ENCODE measurements at regions of chr5 and their contacts with region 1.

Region 1: DNA sequence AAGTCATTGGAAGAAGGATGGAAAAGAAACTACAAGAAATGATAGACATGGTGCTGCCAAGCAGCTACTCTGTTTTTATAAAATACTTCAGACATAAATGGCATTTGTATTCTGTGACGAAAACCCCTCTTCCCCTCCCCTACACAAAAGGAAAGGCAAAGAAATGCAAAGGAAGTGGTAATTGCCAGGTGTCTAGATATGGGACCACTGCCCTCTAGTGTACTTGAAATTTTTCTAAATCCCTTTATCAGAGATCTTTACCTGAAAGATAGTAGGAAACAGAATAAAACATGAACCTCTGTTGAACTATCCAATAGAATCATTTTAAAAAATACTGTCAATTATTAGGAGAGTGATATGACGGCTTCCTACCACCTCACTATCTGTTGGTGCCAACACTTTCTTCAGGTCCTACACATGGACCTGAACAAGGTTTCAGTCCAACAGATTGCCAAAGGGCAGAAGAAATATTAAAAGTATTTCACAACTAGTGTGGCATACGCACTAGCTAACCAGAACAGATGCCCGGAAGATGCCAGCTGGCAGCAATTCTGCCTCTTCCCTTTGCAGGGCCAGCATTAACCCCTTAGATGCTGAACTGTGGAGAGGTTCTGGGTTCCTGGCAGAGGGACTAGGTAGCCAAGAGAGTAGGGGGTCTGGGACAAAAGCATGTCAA is 104.1 kb downstream of the TSSK1B start:
- DNase-seq: peak in 4 of 5 donors; percentile 29 to 69 (median 54)
- ATAC-seq: peak; percentile 73 to 88 (median 82)
- H3K4me3 ChIP-seq: no peak overlapping the region
- H3K27ac ChIP-seq: no peak overlapping the region
- H3K4me1 ChIP-seq: peaks cover 0 to 14% (median 7%) of the 10 kb centered on the region in 12 donors
- H3K27me3 ChIP-seq: no peaks in the 10 kb centered on the region
- CTCF ChIP-seq: peak in 11 of 12 donors; percentile 22 to 67 (median 59)
- POLR2A ChIP-seq: no peak

Region 2: GRCh38 chr5:112174959-112175594 is 1155.6 kb before region 1 on chr5:
- intact Hi-C with region 1: loop called in 1 of 10 experiments (anchors 10 kb)
- DNase-seq: peak in 2 of 5 donors; percentile 16 to 26
- ATAC-seq: peak in 3 of 4 donors; percentile 64 to 74 (median 72)
- H3K4me3 ChIP-seq: no peak overlapping the region
- H3K27ac ChIP-seq: no peak overlapping the region
- H3K4me1 ChIP-seq: no peaks in the 10 kb centered on the region
- H3K27me3 ChIP-seq: no peaks in the 10 kb centered on the region
- CTCF ChIP-seq: peak; percentile 48 to 76 (median 70)
- POLR2A ChIP-seq: no peak

Region 3: DNA sequence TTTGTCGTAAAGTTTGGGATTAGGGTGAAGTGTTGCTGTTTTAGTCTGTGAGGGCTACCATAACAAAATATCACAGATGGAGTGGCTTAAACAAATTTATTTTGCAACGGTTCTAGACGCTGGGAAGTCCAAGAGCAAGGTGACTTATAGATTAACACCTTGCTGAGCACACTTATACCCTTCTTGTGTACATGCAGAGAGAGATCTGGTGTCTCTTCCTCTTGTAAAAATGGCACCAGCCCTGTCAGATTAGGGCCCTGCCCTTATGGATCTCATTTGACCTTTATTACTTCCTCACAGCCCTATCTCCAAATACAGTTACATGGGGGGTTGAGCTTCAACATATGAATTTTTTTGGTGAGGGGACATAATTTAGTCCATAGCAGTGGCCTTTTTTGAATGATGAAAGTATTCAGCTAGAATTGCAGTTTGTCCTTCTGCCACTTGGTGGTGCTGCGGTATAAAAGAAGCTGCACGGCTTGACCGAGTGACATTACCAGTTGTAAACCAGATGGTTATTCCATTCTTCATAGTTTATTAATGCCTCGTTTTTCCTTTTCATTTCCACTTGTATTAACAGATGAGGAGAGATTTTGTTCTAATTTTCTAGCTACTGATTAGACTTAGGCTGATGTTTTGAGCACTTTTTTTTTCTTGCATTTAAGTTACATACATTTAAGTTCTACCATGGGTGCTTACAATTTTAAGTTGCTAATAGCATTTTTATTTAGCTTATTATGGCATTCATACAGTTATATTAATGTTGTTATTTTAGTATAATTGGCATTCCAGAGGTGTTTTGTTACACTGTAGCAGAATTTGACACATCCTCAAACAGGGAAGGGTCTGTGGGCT is 334.7 kb before region 1 on chr5:
- intact Hi-C with region 1: loop called in 9 of 10 experiments (anchors 2 to 5 kb)
- DNase-seq: peak in 4 of 5 donors; percentile 55 to 69 (median 62)
- ATAC-seq: peak in 3 of 4 donors; percentile 69 to 84 (median 84)
- H3K4me3 ChIP-seq: no peak overlapping the region
- H3K27ac ChIP-seq: no peak overlapping the region
- H3K4me1 ChIP-seq: peaks cover 0 to 14% (median 5%) of the 10 kb centered on the region in 12 donors
- H3K27me3 ChIP-seq: no peaks in the 10 kb centered on the region
- CTCF ChIP-seq: peak; percentile 84 to 96 (median 92)
- POLR2A ChIP-seq: no peak

Region 4: GRCh38 chr5:113043491-113043931 is 287.2 kb before region 1 on chr5:
- intact Hi-C with region 1: loop called in 2 of 10 experiments (anchors 5 kb)
- DNase-seq: peak; percentile 70 to 86 (median 81)
- ATAC-seq: peak; percentile 95 to 97 (median 96)
- H3K4me3 ChIP-seq: no peak overlapping the region
- H3K27ac ChIP-seq: peak overlapping the region in 8 of 12 donors; percentile 26 to 61 (median 42)
- H3K4me1 ChIP-seq: peaks cover 0 to 29% (median 14%) of the 10 kb centered on the region in 12 donors
- H3K27me3 ChIP-seq: no peaks in the 10 kb centered on the region
- CTCF ChIP-seq: peak; percentile 21 to 59 (median 36)
- POLR2A ChIP-seq: no peak

Region 5: DNA sequence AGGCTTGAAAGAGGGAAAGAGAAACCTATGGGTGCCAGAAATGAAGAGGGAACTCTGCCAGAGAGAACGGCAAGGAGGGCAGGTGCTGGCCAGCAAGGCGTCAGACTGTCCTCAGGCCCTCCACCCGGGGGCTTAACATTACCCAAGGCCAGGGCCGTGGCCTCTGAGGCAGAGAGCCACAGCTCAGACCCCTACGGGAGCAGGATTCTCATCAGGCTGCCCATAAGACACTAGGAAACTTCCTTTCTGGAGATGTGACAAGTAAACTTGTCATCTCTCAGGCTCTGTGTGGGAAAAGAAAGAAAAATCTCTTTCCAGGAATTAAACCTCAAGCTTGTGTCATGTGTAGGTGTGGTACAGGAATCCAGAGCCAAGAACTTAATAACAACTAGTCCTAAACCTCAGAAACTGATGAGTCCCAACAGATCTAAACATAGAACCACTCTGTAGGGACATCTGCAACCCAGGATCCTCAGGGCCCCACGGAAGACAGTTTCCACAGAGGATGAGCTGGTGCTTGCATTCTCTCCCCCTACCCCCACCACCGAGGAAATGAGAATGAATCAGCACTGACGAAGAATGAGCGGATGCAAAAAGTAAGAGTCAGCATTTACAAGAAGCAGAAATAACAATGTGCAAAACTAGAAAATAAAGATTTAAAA is 279.8 kb before region 1 on chr5:
- intact Hi-C with region 1: loop called in 2 of 10 experiments (anchors 5 kb)
- DNase-seq: peak in 1 of 5 donors; percentile 36
- ATAC-seq: peak; percentile 23 to 64 (median 57)
- H3K4me3 ChIP-seq: no peak overlapping the region
- H3K27ac ChIP-seq: peak overlapping the region in 6 of 12 donors; percentile 33 to 87 (median 46)
- H3K4me1 ChIP-seq: peaks cover 0 to 59% (median 11%) of the 10 kb centered on the region in 12 donors
- H3K27me3 ChIP-seq: no peaks in the 10 kb centered on the region
- CTCF ChIP-seq: no peak
- POLR2A ChIP-seq: no peak

Region 6: GRCh38 chr5:113513384-113514288 is 183.0 kb after region 1 on chr5 and contains the start of gene YTHDC2:
- intact Hi-C with region 1: loop called in 7 of 10 experiments (anchors 2 to 5 kb)
- DNase-seq: peak; percentile 88 to 95 (median 91)
- ATAC-seq: peak; percentile 95 to 98 (median 98)
- H3K4me3 ChIP-seq: peak within 1 kb of the TSS; percentile 77 to 96 (median 82)
- H3K27ac ChIP-seq: peak within 1 kb of the TSS; percentile 70 to 97 (median 92)
- H3K4me1 ChIP-seq: peaks cover 0 to 37% (median 16%) of the 10 kb centered on the region in 12 donors
- H3K27me3 ChIP-seq: peaks cover 0 to 13% (median 0%) of the 10 kb centered on the region in 9 donors
- CTCF ChIP-seq: peak in 10 of 12 donors; percentile 8 to 58 (median 32)
- POLR2A ChIP-seq: peak in 1 of 2 donors; percentile 73
- total RNA-seq, gene YTHDC2: 9.4 to 19.8 (median 15.1) TPM

Region 7: GRCh38 chr5:113606298-113607134 is 275.8 kb after region 1 on chr5:
- intact Hi-C with region 1: loop called in 7 of 10 experiments (anchors 5 to 10 kb)
- DNase-seq: peak in 4 of 5 donors; percentile 30 to 63 (median 46)
- ATAC-seq: peak; percentile 83 to 93 (median 90)
- H3K4me3 ChIP-seq: peak overlapping the region in 6 of 12 donors; percentile 7 to 35 (median 23)
- H3K27ac ChIP-seq: no peak overlapping the region
- H3K4me1 ChIP-seq: peaks cover 0 to 11% (median 2%) of the 10 kb centered on the region in 12 donors
- H3K27me3 ChIP-seq: peaks cover 0 to 3% (median 0%) of the 10 kb centered on the region in 9 donors
- CTCF ChIP-seq: peak; percentile 63 to 84 (median 75)
- POLR2A ChIP-seq: no peak